ENCODE measurements at regions of chr1 and their contacts with region 1.

Region 1: DNA sequence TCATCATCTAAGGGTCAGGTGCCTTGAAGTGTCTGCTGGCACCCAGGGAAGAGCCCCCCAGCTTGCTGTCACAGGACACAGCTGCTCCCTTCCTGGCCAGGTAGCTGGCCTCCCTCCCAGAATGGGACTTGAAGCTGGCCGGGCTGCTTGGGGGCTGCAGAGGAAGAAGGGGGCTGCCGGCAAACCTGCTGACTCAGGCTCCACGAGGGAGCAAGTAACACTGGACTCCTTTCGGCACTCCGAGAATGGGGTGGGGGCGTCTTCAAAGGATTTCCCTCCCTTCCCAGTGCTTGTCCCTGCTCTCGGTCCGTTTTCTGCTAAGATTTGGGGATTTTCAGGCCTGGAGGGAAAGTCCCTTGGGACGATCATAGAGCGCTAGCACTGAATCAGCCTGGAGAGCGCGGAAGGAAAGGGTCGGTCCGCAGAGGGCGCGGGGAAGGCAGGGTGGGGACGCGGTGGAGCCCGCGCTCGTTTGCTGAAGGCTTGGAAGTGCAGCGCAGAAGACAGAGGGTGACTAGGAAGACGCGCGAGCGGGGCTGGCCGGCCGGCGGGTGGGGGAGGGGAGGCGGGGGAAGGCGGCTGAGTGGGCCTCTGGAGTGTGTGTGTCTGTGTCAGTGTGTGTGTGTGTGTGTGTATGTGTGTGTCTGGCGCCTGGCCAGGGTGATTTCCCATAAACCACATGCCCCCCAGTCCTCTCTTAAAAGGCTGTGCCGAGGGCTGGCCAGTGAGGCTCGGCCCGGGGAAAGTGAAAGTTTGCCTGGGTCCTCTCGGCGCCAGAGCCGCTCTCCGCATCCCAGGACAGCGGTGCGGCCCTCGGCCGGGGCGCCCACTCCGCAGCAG is at the start of gene CSF1:
- DNase-seq: peak; percentile 74
- ATAC-seq: peak; percentile 45
- H3K4me3 Mint-ChIP-seq: peak within 1 kb of the TSS; percentile 96
- H3K27ac Mint-ChIP-seq: peak within 1 kb of the TSS; percentile 97
- H3K4me1 Mint-ChIP-seq: peaks cover 75% of the 10 kb centered on the region
- H3K27me3 Mint-ChIP-seq: no peaks in the 10 kb centered on the region
- total RNA-seq, gene CSF1: 42.7 to 45.1 TPM

Region 2: GRCh38 chr1:109790735-109791494 is 119.4 kb before region 1 on chr1:
- POLR2A ChIA-PET with region 1: interaction called, 13 read pairs
- DNase-seq: peak; percentile 86
- ATAC-seq: peak; percentile 97
- H3K4me3 Mint-ChIP-seq: peak overlapping the region; percentile 63
- H3K27ac Mint-ChIP-seq: peak overlapping the region; percentile 85
- H3K4me1 Mint-ChIP-seq: peaks cover 66% of the 10 kb centered on the region
- H3K27me3 Mint-ChIP-seq: no peaks in the 10 kb centered on the region

Region 3: GRCh38 chr1:109796484-109797302 is 113.7 kb before region 1 on chr1:
- POLR2A ChIA-PET with region 1: interaction called, 17 read pairs
- DNase-seq: peak; percentile 26
- ATAC-seq: peak; percentile 56
- H3K4me3 Mint-ChIP-seq: peak overlapping the region; percentile 63
- H3K27ac Mint-ChIP-seq: peak overlapping the region; percentile 92
- H3K4me1 Mint-ChIP-seq: peaks cover 76% of the 10 kb centered on the region
- H3K27me3 Mint-ChIP-seq: no peaks in the 10 kb centered on the region

Region 4: DNA sequence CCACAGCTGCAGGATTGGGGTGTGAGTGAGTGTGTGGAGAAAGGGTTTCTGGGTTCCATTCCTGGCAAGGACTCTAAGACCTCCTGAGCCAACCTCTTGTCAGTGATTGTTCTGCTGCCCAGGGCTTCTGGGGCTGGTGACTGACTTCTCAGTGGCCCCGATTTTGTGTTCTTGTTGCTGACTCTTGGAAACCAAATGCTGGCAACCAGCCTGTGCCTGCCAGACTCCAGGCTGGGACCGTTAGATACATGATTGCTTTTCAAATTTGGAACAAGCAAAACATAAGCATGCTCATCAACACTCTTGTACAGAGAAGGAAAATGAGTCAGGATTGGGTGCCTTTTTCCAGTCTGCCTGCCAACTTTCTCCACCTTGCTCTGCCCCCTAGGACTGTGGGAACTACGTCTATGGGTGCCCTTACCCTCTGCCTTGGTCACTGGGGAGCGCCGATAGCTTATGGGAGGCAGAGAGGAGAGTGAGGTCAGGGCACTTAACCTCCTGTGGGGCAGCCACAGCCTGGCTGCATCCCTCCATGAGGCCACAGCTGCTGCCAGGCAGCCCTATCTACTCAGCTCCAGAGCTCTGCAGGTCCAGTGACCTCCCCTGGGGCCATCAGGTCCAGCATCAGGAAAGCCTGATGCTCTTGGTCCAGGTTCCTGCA is 107.3 kb before region 1 on chr1:
- POLR2A ChIA-PET with region 1: interaction called, 17 read pairs
- DNase-seq: peak; percentile 34
- ATAC-seq: no peak
- H3K4me3 Mint-ChIP-seq: peak overlapping the region; percentile 78
- H3K27ac Mint-ChIP-seq: peak overlapping the region; percentile 97
- H3K4me1 Mint-ChIP-seq: peaks cover 73% of the 10 kb centered on the region
- H3K27me3 Mint-ChIP-seq: no peaks in the 10 kb centered on the region

Measured in activated naive CD8-positive, alpha-beta T cell treated with anti-CD3 and anti-CD28 coated beads, Interleukin-2, amount 10 ng/mL, durations not matched to agents 7 days and 5 days (primary cell).